GM13976 (cell line): ENCODE measurements at regions of chr17 and their contacts with region 1.

Region 1: GRCh38 chr17:81253358-81254131 is 14.4 kb downstream of the NDUFAF8 start:
- DNase-seq: peak; percentile 76
- CTCF ChIP-seq: peak; percentile 76

Region 2: DNA sequence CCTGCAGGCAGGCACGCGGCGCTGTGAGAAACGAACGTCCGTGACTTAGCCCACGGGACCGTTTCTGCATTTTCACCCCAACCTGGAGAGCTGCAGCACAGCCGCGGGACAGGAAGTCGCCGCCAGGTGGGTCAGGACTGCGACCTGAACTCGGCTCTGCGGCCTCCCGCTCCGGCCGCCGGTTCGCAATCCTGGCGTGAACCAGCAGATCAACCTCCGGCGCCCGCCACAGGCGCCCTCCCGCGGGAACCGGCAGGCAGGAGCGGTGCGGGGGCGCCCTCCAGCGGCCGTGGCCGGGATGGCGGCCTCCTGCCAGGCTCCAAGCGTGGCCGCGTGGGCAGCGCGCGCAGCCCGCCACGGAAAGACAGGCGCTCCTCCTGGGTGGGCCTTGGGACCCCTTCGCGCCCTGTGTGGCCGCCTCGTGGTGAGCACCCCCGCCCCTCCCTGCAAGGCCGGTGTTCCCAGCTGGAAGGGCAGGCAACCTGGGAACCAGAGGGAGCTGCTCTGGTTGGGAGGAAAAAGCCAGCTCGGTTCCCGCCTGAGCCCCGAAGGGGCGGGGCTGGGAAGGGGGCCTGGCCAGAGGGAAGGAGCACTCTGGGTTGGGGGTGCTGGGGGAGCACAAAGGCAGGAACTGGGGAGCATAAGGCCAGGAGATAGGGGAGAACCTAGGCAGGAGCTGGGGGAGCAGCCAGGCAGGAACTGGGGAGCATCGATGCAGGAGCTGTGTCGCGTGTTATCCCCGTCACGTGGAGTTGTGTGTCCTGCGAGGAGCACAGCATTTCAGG is 230.8 kb after region 1 on chr17:
- in situ Hi-C with region 1: loop called (anchors 10 kb)
- DNase-seq: peak; percentile 92
- CTCF ChIP-seq: peak; percentile 99